Mammary epithelial cell (primary cell): ENCODE measurements at regions of chr16 and their contacts with region 1.

Region 1: GRCh38 chr16:27972500-27972899 is 91.0 kb downstream of the GSG1L start:
- DNase-seq: peak; percentile 55
- H3K4me3 ChIP-seq: no peak overlapping the region
- H3K27ac ChIP-seq: no peak overlapping the region
- H3K4me1 ChIP-seq: no peaks in the 10 kb centered on the region
- H3K27me3 ChIP-seq: no peaks in the 10 kb centered on the region
- CTCF ChIP-seq: peak; percentile 57 to 76

Region 2: GRCh38 chr16:27639561-27640276 is 332.8 kb before region 1 on chr16:
- CTCF ChIA-PET with region 1: no interaction called
- dilution Hi-C with region 1: no loop called
- in situ Hi-C with region 1: no loop called
- intact Hi-C with region 1: loop called (anchors 5 kb)
- DNase-seq: peak; percentile 41
- H3K4me3 ChIP-seq: no peak overlapping the region
- H3K27ac ChIP-seq: no peak overlapping the region
- H3K4me1 ChIP-seq: peaks cover 7% of the 10 kb centered on the region
- H3K27me3 ChIP-seq: no peaks in the 10 kb centered on the region
- CTCF ChIP-seq: peak; percentile 58 to 81

Region 3: GRCh38 chr16:27690608-27691007 is 281.9 kb before region 1 on chr16:
- CTCF ChIA-PET with region 1: no interaction called
- dilution Hi-C with region 1: no loop called
- in situ Hi-C with region 1: no loop called
- intact Hi-C with region 1: loop called (anchors 5 kb)
- DNase-seq: no peak
- H3K4me3 ChIP-seq: no peak overlapping the region
- H3K27ac ChIP-seq: no peak overlapping the region
- H3K4me1 ChIP-seq: no peaks in the 10 kb centered on the region
- H3K27me3 ChIP-seq: no peaks in the 10 kb centered on the region
- CTCF ChIP-seq: peak; percentile 30 to 45

Region 4: DNA sequence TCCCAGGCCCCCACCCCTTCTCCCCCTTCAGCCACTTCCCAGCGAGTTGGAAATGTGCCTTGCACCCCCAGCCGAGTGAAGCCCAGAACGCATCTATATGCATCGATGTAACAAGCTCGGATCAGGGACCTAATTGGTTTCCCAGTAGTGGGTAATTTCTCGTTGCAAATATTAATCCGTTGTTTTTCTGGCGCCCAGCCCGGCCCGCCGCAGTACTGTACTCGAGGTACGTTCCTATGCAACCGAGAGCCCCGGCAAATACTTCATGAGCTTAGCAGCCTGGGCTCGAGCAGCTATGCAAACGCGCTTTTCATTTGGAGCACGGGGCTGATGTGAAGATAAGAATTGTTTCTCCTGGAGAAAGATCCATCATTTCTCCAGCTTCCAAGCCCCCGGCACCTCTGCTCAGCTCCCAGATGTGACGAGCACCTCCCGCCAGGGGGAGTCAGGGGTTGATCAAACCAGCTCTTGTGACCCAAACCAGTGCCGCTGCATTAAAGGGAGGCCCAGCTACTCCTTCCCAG is 192.8 kb before region 1 on chr16:
- CTCF ChIA-PET with region 1: no interaction called
- dilution Hi-C with region 1: no loop called
- in situ Hi-C with region 1: no loop called
- intact Hi-C with region 1: loop called (anchors 5 kb)
- DNase-seq: peak; percentile 12
- H3K4me3 ChIP-seq: no peak overlapping the region
- H3K27ac ChIP-seq: no peak overlapping the region
- H3K4me1 ChIP-seq: no peaks in the 10 kb centered on the region
- H3K27me3 ChIP-seq: no peaks in the 10 kb centered on the region
- CTCF ChIP-seq: peak; percentile 22 to 45

Region 5: GRCh38 chr16:27906883-27907282 is 65.6 kb before region 1 on chr16:
- CTCF ChIA-PET with region 1: no interaction called
- dilution Hi-C with region 1: loop called (anchors 10 kb)
- in situ Hi-C with region 1: no loop called
- intact Hi-C with region 1: no loop called
- DNase-seq: no peak
- H3K4me3 ChIP-seq: no peak overlapping the region
- H3K27ac ChIP-seq: no peak overlapping the region
- H3K4me1 ChIP-seq: no peaks in the 10 kb centered on the region
- H3K27me3 ChIP-seq: no peaks in the 10 kb centered on the region
- CTCF ChIP-seq: no peak